Activated T-helper 1 cell treated with anti-CD3 and anti-CD28 coated beads, Interleukin-12 subunit alpha, Interleukin-12 subunit beta, Interleukin-2, Interleukin-4 antibody, amounts not matched to agents 30 ng/mL and 10 ng/mL and 1 ng/mL, durations not matched to agents 14 hours and 24 hours and 36 hours (primary cell): ENCODE measurements at regions of chr6 and their contacts with region 1.

Region 1: GRCh38 chr6:145963216-145964068 is 716 bp downstream of the SHPRH start:
- DNase-seq: peak; percentile 19
- H3K4me3 Mint-ChIP-seq: peak overlapping the region; percentile 98
- H3K27ac Mint-ChIP-seq: peak overlapping the region; percentile 93
- H3K4me1 Mint-ChIP-seq: peaks cover 40% of the 10 kb centered on the region
- H3K27me3 Mint-ChIP-seq: no peaks in the 10 kb centered on the region

Region 2: GRCh38 chr6:145814501-145815308 is 148.7 kb before region 1 on chr6 and contains the start of gene FBXO30:
- intact Hi-C with region 1: loop called (anchors 1 kb)
- DNase-seq: peak; percentile 83
- H3K4me3 Mint-ChIP-seq: peak within 1 kb of the TSS; percentile 90
- H3K27ac Mint-ChIP-seq: peak within 1 kb of the TSS; percentile 89
- H3K4me1 Mint-ChIP-seq: peaks cover 61% of the 10 kb centered on the region
- H3K27me3 Mint-ChIP-seq: no peaks in the 10 kb centered on the region
- total RNA-seq, gene FBXO30: 8.8 TPM in 2 replicates

Region 3: DNA sequence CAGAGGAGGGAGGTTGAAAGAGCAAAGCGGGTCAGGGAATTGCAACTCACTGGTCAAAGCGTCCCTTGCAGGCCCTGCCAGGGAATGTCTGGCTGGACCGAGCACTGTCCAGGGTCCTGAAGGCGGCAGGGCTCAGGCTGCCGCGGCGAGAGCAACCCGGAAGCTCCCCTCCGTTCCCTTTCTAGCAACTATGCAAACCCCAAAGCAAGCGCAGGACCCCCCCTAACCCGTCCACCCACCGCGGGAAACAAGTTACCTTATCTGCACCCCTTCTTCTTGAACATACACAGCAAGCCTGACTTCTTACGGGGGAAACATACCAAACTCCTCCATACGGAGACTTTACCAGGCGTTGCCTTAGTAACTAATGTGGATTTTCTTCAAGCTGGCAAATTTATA is 64.8 kb after region 1 on chr6:
- intact Hi-C with region 1: loop called (anchors 1 kb)
- DNase-seq: no peak
- H3K4me3 Mint-ChIP-seq: no peak overlapping the region
- H3K27ac Mint-ChIP-seq: no peak overlapping the region
- H3K4me1 Mint-ChIP-seq: no peaks in the 10 kb centered on the region
- H3K27me3 Mint-ChIP-seq: peaks cover 27% of the 10 kb centered on the region

Region 4: GRCh38 chr6:146543211-146543939 is 579.9 kb after region 1 on chr6 and contains the start of gene RAB32:
- intact Hi-C with region 1: loop called (anchors 1 kb)
- DNase-seq: peak; percentile 5
- H3K4me3 Mint-ChIP-seq: peak within 1 kb of the TSS; percentile 86
- H3K27ac Mint-ChIP-seq: peak within 1 kb of the TSS; percentile 68
- H3K4me1 Mint-ChIP-seq: peaks cover 10% of the 10 kb centered on the region
- H3K27me3 Mint-ChIP-seq: peaks cover 26% of the 10 kb centered on the region
- total RNA-seq, gene RAB32: 1.1 and 1.3 TPM in 2 replicates

Region 5: GRCh38 chr6:146892613-146893401 is 929.4 kb after region 1 on chr6:
- intact Hi-C with region 1: no loop called
- DNase-seq: no peak
- H3K4me3 Mint-ChIP-seq: no peak overlapping the region
- H3K27ac Mint-ChIP-seq: no peak overlapping the region
- H3K4me1 Mint-ChIP-seq: peaks cover 14% of the 10 kb centered on the region
- H3K27me3 Mint-ChIP-seq: peaks cover 4% of the 10 kb centered on the region